ENCODE measurements at regions of chr7 and their contacts with region 1.

Region 1: GRCh38 chr7:29806208-29806994 is at the start of gene WIPF3:
- DNase-seq: peak; percentile 76
- H3K4me3 Mint-ChIP-seq: peak within 1 kb of the TSS; percentile 68
- H3K27ac Mint-ChIP-seq: no peak within 1 kb of the TSS
- H3K4me1 Mint-ChIP-seq: no peaks in the 10 kb centered on the region
- H3K27me3 Mint-ChIP-seq: peaks cover 57% of the 10 kb centered on the region
- CTCF ChIP-seq: no peak
- total RNA-seq, gene WIPF3: 4.9 and 6.4 TPM in 2 replicates

Region 2: DNA sequence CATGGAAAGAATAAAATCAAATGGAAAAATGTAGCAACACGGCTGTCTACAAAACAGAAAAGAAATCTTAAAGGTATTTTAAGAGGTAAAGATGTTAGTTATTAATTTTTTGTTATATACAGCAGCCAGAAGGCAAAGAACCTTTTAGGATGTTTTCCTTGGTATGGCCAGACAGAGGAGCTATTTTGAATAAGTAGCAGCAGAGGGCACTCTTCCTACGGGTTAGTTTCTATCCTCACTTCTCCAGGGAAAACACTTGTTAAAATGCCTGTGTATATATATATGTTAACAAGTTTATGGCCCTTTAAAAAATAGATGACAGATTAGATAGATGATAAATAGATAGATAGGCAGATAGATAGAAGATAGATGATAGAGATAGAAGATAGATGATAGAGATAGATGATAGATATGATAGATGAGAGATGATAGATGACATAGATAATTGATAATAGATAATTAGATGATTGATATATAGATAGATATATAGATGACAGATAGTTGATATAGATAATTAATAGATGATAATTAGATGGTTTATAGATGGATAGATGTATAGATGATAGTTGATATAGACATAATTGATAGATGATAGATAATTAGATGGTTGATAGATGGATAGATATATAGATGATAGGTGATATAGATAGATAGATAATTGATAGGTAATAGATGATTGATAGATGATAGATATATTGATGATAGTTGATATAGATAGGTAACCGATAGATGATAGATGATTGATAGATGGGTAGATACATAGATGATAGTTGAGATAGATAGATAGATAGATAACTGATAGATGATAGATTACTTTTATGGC is 57.9 kb before region 1 on chr7:
- CTCF ChIA-PET with region 1: interaction called, 7 read pairs
- intact Hi-C with region 1: loop called (anchors 5 kb)
- DNase-seq: peak; percentile 22
- H3K4me3 Mint-ChIP-seq: no peak overlapping the region
- H3K27ac Mint-ChIP-seq: no peak overlapping the region
- H3K4me1 Mint-ChIP-seq: peaks cover 14% of the 10 kb centered on the region
- H3K27me3 Mint-ChIP-seq: peaks cover 20% of the 10 kb centered on the region
- CTCF ChIP-seq: peak; percentile 19

Measured in Calu3 (cell line).